Heart left ventricle (tissue), 16 donors: ENCODE measurements at regions of chr22 and their contacts with region 1.

Region 1: GRCh38 chr22:47043835-47044721 is 281.6 kb downstream of the TBC1D22A start:
- DNase-seq: peak in 2 of 5 donors; percentile 17 to 58
- ATAC-seq: peak in 1 of 4 donors; percentile 20
- H3K4me3 ChIP-seq: no peak overlapping the region
- H3K27ac ChIP-seq: no peak overlapping the region
- H3K4me1 ChIP-seq: peaks cover 0 to 4% (median 0%) of the 10 kb centered on the region in 12 donors
- H3K27me3 ChIP-seq: no peaks in the 10 kb centered on the region
- CTCF ChIP-seq: no peak
- POLR2A ChIP-seq: no peak

Region 2: GRCh38 chr22:46116491-46116958 is 927.6 kb before region 1 on chr22:
- intact Hi-C with region 1: no loop called
- DNase-seq: peak; percentile 94 to 97 (median 95)
- ATAC-seq: peak; percentile 73 to 83 (median 75)
- H3K4me3 ChIP-seq: no peak overlapping the region
- H3K27ac ChIP-seq: peak overlapping the region in 11 of 12 donors; percentile 49 to 86 (median 81)
- H3K4me1 ChIP-seq: peaks cover 19 to 68% (median 47%) of the 10 kb centered on the region in 12 donors
- H3K27me3 ChIP-seq: no peaks in the 10 kb centered on the region
- CTCF ChIP-seq: peak; percentile 57 to 99 (median 76)
- POLR2A ChIP-seq: no peak

Region 3: GRCh38 chr22:46953968-46954765 is 89.9 kb before region 1 on chr22:
- intact Hi-C with region 1: no loop called
- DNase-seq: no peak
- ATAC-seq: no peak
- H3K4me3 ChIP-seq: no peak overlapping the region
- H3K27ac ChIP-seq: no peak overlapping the region
- H3K4me1 ChIP-seq: no peaks in the 10 kb centered on the region
- H3K27me3 ChIP-seq: no peaks in the 10 kb centered on the region
- CTCF ChIP-seq: no peak
- POLR2A ChIP-seq: no peak

Region 4: DNA sequence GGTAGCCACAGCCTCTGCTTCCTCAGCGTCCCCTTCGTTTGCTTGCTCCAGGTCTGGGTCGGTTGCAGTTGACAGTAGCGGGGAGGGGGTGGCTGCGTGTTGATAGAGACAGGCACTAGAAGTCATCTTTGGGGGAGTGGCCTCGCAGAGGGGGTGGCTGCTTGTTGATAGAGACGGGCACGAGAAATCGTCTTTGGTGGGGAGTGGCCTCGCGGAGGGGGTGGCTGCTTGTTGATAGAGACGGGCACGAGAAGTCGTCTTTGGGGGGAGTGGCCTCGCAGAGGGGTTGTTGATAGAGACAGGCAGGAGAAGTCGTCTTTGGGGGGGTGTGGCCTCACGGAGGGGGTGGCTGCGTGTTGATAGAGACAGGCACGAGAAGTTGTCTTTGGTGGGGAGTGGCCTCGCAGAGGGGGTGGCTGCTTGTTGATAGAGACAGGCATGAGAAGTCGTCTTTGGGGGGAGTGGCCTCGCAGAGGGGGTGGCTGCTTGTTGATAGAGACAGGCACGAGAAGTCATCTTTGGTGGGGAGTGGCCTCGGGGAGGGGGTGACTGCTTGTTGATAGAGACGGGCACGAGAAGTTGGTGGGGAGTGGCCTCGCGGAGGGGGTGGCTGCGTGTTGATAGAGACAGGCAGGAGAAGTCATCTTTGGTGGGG is 46.6 kb after region 1 on chr22:
- intact Hi-C with region 1: no loop called
- DNase-seq: no peak
- ATAC-seq: no peak
- H3K4me3 ChIP-seq: peak overlapping the region in 8 of 12 donors; percentile 12 to 44 (median 32)
- H3K27ac ChIP-seq: no peak overlapping the region
- H3K4me1 ChIP-seq: peaks cover 0 to 12% (median 0%) of the 10 kb centered on the region in 12 donors
- H3K27me3 ChIP-seq: no peaks in the 10 kb centered on the region
- CTCF ChIP-seq: no peak
- POLR2A ChIP-seq: no peak

Region 5: DNA sequence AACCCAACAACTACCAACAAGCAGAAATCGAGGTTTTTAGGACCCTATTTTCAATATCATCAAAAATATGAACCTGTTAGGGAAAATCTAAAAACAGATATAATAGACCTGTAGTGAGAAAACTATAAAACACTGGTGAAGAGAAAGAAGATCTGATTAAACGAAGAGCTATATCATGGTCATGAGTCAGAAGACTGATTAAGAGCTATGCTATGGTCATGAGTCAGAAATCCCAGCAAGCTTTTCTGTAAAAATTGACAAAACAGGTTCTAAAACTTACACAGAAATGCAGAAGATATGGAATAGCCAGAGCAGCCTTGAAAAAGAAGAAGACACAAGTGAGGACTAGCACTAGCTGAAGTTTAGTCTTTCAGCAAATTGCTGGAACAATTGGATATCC is 63.4 kb after region 1 on chr22:
- intact Hi-C with region 1: loop called in 1 of 10 experiments (anchors 10 kb)
- DNase-seq: no peak
- ATAC-seq: no peak
- H3K4me3 ChIP-seq: no peak overlapping the region
- H3K27ac ChIP-seq: no peak overlapping the region
- H3K4me1 ChIP-seq: no peaks in the 10 kb centered on the region
- H3K27me3 ChIP-seq: no peaks in the 10 kb centered on the region
- CTCF ChIP-seq: no peak
- POLR2A ChIP-seq: no peak